ENCODE measurements at regions of chr14 and their contacts with region 1.

Region 1: DNA sequence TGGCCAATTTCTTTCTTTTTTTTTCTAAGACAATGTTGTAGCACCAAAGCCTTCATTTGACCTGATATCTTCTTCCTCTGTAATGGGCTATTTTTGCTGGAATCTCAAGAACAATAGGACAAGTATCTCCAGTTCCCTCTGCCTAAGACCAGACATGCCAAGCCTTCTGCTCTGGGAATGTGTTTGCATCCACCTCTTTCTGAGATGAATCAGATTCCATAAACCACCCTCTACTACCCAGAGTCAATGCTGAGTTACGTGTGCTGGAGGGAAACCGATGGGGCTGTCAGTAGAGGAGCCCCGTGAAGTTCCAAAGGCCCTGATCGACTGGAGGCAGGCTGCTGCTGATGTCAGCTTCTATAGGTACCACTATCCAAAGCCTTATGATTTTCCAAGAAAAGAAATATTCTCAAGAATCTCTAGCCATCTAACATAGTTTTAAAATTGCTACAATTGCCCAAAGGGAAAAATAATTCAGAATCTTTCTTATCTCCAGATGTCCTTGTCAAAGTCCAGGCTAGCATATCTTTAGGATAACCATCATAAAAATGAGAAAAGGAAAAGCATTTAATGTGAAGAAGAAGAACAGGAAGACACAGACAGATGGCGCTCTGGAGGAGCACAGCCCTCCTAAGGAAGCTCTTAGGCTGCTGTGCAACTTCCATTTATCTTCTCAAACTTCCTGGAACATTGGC is 101.9 kb downstream of the SLC8A3 start:
- DNase-seq: peak; percentile 60
- ATAC-seq: peak; percentile 94
- H3K4me3 ChIP-seq: no peak overlapping the region
- H3K27ac ChIP-seq: no peak overlapping the region
- H3K4me1 ChIP-seq: no peaks in the 10 kb centered on the region
- H3K27me3 ChIP-seq: peaks cover 82% of the 10 kb centered on the region
- CTCF ChIP-seq: peak; percentile 87

Region 2: GRCh38 chr14:70317969-70318634 is 231.3 kb after region 1 on chr14:
- CTCF ChIA-PET with region 1: interaction called, 4 read pairs
- POLR2A ChIA-PET with region 1: no interaction called
- intact Hi-C with region 1: loop called (anchors 1 kb)
- DNase-seq: peak; percentile 73
- ATAC-seq: peak; percentile 90
- H3K4me3 ChIP-seq: no peak overlapping the region
- H3K27ac ChIP-seq: no peak overlapping the region
- H3K4me1 ChIP-seq: no peaks in the 10 kb centered on the region
- H3K27me3 ChIP-seq: peaks cover 13% of the 10 kb centered on the region; the same call in 1 of the 2 replicates
- CTCF ChIP-seq: peak; percentile 82

Region 3: GRCh38 chr14:70567791-70568190 is 481.0 kb after region 1 on chr14:
- CTCF ChIA-PET with region 1: interaction called, 9 read pairs
- POLR2A ChIA-PET with region 1: no interaction called
- intact Hi-C with region 1: loop called (anchors 1 kb)
- DNase-seq: peak; percentile 70
- ATAC-seq: peak; percentile 97
- H3K4me3 ChIP-seq: no peak overlapping the region
- H3K27ac ChIP-seq: no peak overlapping the region
- H3K4me1 ChIP-seq: no peaks in the 10 kb centered on the region
- H3K27me3 ChIP-seq: no peaks in the 10 kb centered on the region
- CTCF ChIP-seq: peak; percentile 90

Region 4: GRCh38 chr14:70585219-70585618 is 498.4 kb after region 1 on chr14:
- CTCF ChIA-PET with region 1: no interaction called
- POLR2A ChIA-PET with region 1: no interaction called
- intact Hi-C with region 1: loop called (anchors 5 kb)
- DNase-seq: peak; percentile 11
- ATAC-seq: peak; percentile 61
- H3K4me3 ChIP-seq: no peak overlapping the region
- H3K27ac ChIP-seq: no peak overlapping the region
- H3K4me1 ChIP-seq: no peaks in the 10 kb centered on the region
- H3K27me3 ChIP-seq: no peaks in the 10 kb centered on the region
- CTCF ChIP-seq: no peak; the same call in 1 of the 2 replicates

Region 5: DNA sequence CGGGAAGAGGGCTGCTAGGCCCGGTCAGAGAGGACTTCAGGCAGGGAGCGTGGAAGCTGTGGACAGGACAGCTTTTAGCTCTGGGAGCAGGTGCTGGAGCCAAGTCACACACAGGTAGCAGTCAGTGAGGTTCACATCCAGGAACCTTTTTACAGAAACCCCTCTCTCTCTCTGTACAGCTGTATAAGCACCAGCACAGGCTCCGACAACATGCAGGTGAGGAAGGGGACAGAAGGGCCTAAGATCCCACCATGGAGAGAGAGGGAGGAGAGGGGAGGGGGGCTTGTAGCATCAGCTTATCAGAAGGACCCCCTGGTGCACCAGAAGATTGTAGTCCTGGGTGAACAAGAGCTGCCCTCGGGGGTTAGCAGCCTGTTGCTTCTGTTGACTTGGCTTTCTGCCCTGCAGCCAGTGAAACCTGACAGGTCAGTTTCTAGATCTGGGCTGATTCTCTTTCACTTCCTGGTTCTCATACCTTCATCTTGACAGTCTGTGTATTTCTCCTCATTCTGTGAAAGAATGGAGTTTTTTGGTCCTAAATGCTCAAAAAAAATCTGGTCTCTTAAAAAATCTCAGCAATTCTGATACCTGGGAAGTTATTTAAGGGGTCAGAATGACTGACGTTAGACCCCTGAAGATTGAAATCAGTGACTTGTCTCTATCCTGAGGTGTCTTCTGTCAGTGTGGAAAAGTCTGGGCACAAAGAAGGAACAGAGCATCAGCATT is 578.5 kb after region 1 on chr14:
- CTCF ChIA-PET with region 1: no interaction called
- POLR2A ChIA-PET with region 1: no interaction called
- intact Hi-C with region 1: no loop called
- DNase-seq: peak; percentile 94
- ATAC-seq: peak; percentile 76
- H3K4me3 ChIP-seq: peak overlapping the region; percentile 18; the same call in 1 of the 2 replicates
- H3K27ac ChIP-seq: peak overlapping the region; percentile 91
- H3K4me1 ChIP-seq: peaks cover 27% of the 10 kb centered on the region
- H3K27me3 ChIP-seq: no peaks in the 10 kb centered on the region
- CTCF ChIP-seq: no peak